Heart left ventricle (tissue), 16 donors: ENCODE measurements at regions of chr9 and their contacts with region 1.

Region 1: GRCh38 chr9:89278997-89279739 is 31.8 kb upstream of the CKS2 start:
- DNase-seq: no peak
- ATAC-seq: no peak
- H3K4me3 ChIP-seq: no peak overlapping the region
- H3K27ac ChIP-seq: no peak overlapping the region
- H3K4me1 ChIP-seq: peaks cover 0 to 11% (median 0%) of the 10 kb centered on the region in 12 donors
- H3K27me3 ChIP-seq: no peaks in the 10 kb centered on the region
- CTCF ChIP-seq: peak; percentile 52 to 70 (median 62)
- POLR2A ChIP-seq: no peak

Region 2: GRCh38 chr9:88583901-88584596 is 695.1 kb before region 1 on chr9:
- intact Hi-C with region 1: loop called in 1 of 10 experiments (anchors 10 kb)
- DNase-seq: no peak
- ATAC-seq: peak in 3 of 4 donors; percentile 22 to 63 (median 39)
- H3K4me3 ChIP-seq: no peak overlapping the region
- H3K27ac ChIP-seq: peak overlapping the region in 1 of 12 donors; percentile 26
- H3K4me1 ChIP-seq: peaks cover 0 to 6% (median 0%) of the 10 kb centered on the region in 12 donors
- H3K27me3 ChIP-seq: no peaks in the 10 kb centered on the region
- CTCF ChIP-seq: no peak
- POLR2A ChIP-seq: no peak

Region 3: GRCh38 chr9:88593537-88594185 is 685.5 kb before region 1 on chr9:
- intact Hi-C with region 1: loop called in 9 of 10 experiments (anchors 5 to 10 kb)
- DNase-seq: peak in 3 of 5 donors; percentile 59 to 66 (median 62)
- ATAC-seq: peak in 3 of 4 donors; percentile 68 to 76 (median 71)
- H3K4me3 ChIP-seq: no peak overlapping the region
- H3K27ac ChIP-seq: no peak overlapping the region
- H3K4me1 ChIP-seq: peaks cover 0 to 4% (median 0%) of the 10 kb centered on the region in 12 donors
- H3K27me3 ChIP-seq: no peaks in the 10 kb centered on the region
- CTCF ChIP-seq: peak; percentile 51 to 79 (median 70)
- POLR2A ChIP-seq: no peak

Region 4: DNA sequence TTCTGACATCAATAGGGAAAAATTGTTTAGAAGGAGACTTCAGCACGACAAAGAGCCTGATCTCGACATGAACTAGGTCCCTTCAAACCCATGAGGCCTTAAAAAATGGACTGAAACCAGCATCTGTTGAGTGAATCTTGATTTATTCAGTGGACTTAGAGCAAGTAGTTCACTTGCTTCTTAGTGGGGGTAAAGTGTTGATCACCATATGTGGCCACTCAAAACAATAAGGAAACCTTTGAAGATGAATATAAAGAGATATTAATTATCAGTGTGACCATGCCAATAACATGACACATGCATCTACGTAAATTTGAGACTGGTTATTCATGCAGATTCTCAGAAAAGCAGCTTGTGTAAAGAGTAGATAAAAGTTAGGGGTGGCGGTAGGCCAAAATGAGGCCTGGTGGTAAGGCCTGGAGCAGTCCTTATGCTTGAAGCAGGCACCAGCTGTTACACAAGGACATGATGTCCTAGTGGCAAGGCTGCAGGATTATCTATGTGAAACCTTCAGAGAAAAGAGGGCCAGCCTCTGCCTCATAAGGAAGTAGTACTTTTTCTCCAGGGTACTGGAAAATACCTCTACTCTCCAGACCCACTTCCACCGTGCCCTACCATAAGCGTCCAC is 226.6 kb before region 1 on chr9:
- intact Hi-C with region 1: loop called in 1 of 10 experiments (anchors 10 kb)
- DNase-seq: peak in 2 of 5 donors; percentile 53 to 60
- ATAC-seq: peak in 3 of 4 donors; percentile 48 to 89 (median 73)
- H3K4me3 ChIP-seq: no peak overlapping the region
- H3K27ac ChIP-seq: peak overlapping the region in 2 of 12 donors; percentile 1 to 42
- H3K4me1 ChIP-seq: peaks cover 0 to 8% (median 0%) of the 10 kb centered on the region in 12 donors
- H3K27me3 ChIP-seq: no peaks in the 10 kb centered on the region
- CTCF ChIP-seq: no peak
- POLR2A ChIP-seq: no peak

Region 5: DNA sequence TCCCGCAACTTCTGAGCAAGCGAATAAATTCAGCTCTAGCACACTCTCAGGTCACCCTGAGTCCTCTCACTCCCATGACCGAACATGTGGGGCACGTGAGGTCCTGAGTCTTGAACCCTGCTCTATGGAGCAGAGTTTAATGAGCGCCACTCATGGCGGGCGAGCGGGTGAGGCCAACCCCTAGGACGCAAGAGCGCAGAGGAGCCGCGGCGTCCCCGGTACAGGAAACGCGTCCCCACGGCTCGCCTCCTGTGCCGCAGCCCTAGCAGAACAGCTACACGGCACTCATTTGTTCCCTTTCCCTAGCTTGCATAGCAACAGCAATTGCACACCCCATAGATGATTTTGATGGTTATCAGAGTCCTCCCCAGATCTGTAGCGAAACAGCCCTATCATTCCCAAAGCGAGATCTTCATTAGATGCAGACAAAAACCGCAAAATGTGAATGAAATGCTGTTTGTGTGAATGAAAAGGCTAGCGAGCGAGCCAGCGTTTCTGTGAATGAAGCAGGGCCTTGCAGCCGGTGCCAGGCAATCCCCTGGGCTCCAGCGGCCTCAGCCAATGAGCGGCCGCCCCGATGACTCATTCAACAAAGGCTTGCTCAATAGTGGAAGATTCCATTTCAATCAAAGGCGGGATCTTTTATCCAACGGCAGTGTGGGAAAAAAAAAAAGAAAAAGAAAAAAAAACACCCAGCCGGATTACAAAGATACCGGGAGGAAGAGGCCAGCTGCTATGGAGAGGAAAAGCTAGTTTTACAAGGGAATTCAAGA is 99.1 kb before region 1 on chr9:
- intact Hi-C with region 1: loop called in 1 of 10 experiments (anchors 10 kb)
- DNase-seq: peak; percentile 83 to 93 (median 91)
- ATAC-seq: peak; percentile 95 to 97 (median 96)
- H3K4me3 ChIP-seq: peak overlapping the region; percentile 24 to 62 (median 48)
- H3K27ac ChIP-seq: peak overlapping the region in 11 of 12 donors; percentile 51 to 79 (median 69)
- H3K4me1 ChIP-seq: peaks cover 0 to 39% (median 22%) of the 10 kb centered on the region in 12 donors
- H3K27me3 ChIP-seq: peaks cover 5 to 49% (median 29%) of the 10 kb centered on the region in 9 donors
- CTCF ChIP-seq: no peak
- POLR2A ChIP-seq: peak in 1 of 2 donors; percentile 61